ENCODE measurements at regions of chr2 and their contacts with region 1.

Region 1: GRCh38 chr2:15939854-15940660 is at the start of gene MYCN:
- DNase-seq: peak in 6 of 14 experiments; percentile 7 to 66 (median 18)
- ATAC-seq: peak; percentile 45
- H3K4me3 ChIP-seq: peak within 1 kb of the TSS; percentile 43
- H3K4me3 Mint-ChIP-seq: peak within 1 kb of the TSS; percentile 87
- H3K27ac ChIP-seq: no peak within 1 kb of the TSS
- H3K27ac Mint-ChIP-seq: no peak within 1 kb of the TSS
- H3K4me1 ChIP-seq: peaks cover 41% of the 10 kb centered on the region
- H3K4me1 Mint-ChIP-seq: peaks cover 36% of the 10 kb centered on the region
- H3K27me3 ChIP-seq: peaks cover 39 to 52% of the 10 kb centered on the region in 2 experiments
- H3K27me3 Mint-ChIP-seq: peaks cover 62% of the 10 kb centered on the region
- CTCF ChIP-seq: peak; percentile 69
- total RNA-seq, gene MYCN: 0.19 TPM in 1 of 2 experiments, not detected in the other

Region 2: DNA sequence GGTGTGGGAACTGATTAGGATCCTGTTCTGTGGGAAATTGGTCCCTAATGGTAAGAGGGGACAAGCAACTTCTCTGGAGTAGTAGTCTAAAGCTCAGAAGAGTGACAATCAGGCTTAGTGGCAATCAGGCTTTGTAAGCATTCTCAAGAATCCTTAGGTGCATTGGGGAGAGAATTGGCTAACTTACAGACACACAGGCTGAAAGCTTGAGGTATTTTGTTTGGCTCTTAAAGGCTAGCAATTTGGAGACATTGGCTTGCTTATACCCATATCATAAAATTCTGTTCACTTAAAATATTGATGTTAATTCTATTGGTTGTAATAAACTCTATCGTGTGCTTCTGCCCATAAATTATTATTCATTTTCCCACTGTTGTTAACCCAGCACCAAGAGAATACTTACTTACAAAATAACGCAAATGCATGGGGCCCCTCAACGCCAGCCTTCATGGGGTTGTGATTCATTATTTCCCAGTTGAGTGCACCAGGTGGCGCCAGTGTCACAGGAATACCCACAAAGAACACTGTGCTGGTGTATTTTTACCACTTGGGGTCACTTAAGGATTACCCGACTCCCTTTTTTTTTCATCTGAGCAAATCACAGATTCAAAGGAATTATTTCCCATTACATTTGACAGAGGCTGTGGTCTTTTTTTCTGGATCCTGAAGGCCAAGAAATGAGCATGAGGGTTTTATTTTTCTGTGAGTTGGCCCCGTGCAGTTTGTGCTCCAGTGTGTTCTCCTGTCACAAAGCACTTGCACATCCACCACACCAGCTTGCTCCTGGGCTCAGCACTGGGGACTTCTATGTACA is 302.9 kb before region 1 on chr2:
- CTCF ChIA-PET with region 1: no interaction called
- POLR2A ChIA-PET with region 1: no interaction called
- intact Hi-C with region 1: loop called in 1 of 2 experiments (anchors 10 kb)
- DNase-seq: peak; percentile 27 to 74 (median 47)
- ATAC-seq: peak; percentile 80
- H3K4me3 ChIP-seq: no peak overlapping the region
- H3K4me3 Mint-ChIP-seq: no peak overlapping the region
- H3K27ac ChIP-seq: no peak overlapping the region
- H3K27ac Mint-ChIP-seq: peak overlapping the region; percentile 49
- H3K4me1 ChIP-seq: no peaks in the 10 kb centered on the region
- H3K4me1 Mint-ChIP-seq: peaks cover 7% of the 10 kb centered on the region
- H3K27me3 ChIP-seq: no peaks in the 10 kb centered on the region
- H3K27me3 Mint-ChIP-seq: no peaks in the 10 kb centered on the region
- CTCF ChIP-seq: peak; percentile 94

Region 3: DNA sequence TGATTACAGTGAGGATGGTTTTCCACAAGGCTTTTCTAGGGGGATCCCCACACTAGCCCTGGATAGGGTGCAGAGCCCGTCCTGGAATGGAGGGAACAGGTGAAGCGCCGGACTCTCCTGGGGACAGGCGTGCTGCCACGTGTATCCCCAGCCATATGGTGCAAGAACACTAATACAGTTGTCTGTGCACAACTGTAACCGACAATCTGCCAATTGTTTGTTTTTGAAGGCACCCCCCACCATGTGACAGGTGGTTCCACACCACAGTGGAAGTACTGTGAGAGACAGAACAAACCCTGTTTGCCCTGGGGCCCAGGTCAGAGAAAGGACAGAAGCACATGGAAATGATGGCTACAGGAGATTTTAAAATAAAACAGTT is 53.2 kb after region 1 on chr2:
- CTCF ChIA-PET with region 1: no interaction called
- POLR2A ChIA-PET with region 1: no interaction called
- intact Hi-C with region 1: no loop called
- DNase-seq: no peak
- ATAC-seq: no peak
- H3K4me3 ChIP-seq: no peak overlapping the region
- H3K4me3 Mint-ChIP-seq: no peak overlapping the region
- H3K27ac ChIP-seq: no peak overlapping the region
- H3K27ac Mint-ChIP-seq: no peak overlapping the region
- H3K4me1 ChIP-seq: no peaks in the 10 kb centered on the region
- H3K4me1 Mint-ChIP-seq: no peaks in the 10 kb centered on the region
- H3K27me3 ChIP-seq: no peaks in the 10 kb centered on the region
- H3K27me3 Mint-ChIP-seq: no peaks in the 10 kb centered on the region
- CTCF ChIP-seq: no peak

Region 4: DNA sequence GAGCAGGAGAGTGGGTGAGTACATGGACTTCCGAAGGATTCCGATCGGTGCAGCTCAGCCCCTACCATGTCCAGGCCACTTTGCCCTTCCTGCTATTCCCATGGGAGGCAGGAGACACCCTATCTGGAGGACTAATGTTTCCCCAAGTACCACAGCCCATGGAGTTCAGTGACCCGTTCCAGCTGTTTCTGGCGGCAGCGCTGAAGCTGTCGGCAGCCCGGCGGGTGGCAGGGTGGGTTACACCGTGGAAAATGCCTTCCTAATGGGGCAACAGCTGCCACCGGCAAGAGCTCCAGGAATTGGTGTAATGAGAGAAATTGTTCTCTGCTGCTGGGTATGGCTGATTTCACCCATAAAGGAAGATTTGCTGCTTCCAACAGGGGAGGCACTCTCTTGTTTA is 98.6 kb after region 1 on chr2:
- CTCF ChIA-PET with region 1: no interaction called
- POLR2A ChIA-PET with region 1: no interaction called
- intact Hi-C with region 1: no loop called
- DNase-seq: no peak
- ATAC-seq: no peak
- H3K4me3 ChIP-seq: no peak overlapping the region
- H3K4me3 Mint-ChIP-seq: no peak overlapping the region
- H3K27ac ChIP-seq: no peak overlapping the region
- H3K27ac Mint-ChIP-seq: no peak overlapping the region
- H3K4me1 ChIP-seq: no peaks in the 10 kb centered on the region
- H3K4me1 Mint-ChIP-seq: no peaks in the 10 kb centered on the region
- H3K27me3 ChIP-seq: no peaks in the 10 kb centered on the region
- H3K27me3 Mint-ChIP-seq: peaks cover 12% of the 10 kb centered on the region
- CTCF ChIP-seq: no peak

Region 5: DNA sequence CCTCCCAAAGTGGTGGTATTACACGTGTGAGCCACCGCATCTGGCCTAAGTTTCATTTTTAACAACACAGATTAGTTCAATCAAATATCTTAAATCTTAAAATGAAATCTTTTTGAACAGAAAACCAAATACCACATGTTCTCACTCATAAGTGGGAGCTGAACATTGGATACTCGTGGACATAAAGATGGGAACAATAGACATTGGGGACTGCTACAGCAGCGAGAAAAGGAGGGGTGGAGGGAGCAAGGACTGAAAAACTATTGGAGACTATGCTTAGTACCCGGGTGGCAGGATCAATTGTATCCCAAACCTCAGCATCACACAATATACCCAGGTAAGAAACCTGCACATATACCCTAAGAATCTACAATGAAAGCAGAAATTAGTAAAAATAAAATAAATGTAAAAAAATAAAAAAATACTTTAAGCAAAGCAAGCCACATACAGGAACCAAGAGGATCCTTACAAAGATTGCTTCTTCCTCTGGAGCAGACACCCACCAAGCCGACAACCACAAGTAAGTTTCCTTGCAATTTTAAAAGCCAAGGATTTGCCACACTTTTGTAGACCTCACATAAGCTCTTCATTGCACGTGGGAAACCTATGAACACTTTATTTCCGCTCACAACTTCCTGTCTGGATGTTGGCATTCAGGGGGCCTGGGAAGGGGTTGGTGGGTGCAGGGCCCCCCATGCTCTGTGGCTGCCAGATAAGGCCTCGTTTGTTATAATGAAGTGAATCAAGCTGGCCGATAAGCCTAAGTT is 148.2 kb after region 1 on chr2:
- CTCF ChIA-PET with region 1: no interaction called
- POLR2A ChIA-PET with region 1: no interaction called
- intact Hi-C with region 1: loop called in 1 of 2 experiments (anchors 5 kb)
- DNase-seq: no peak
- ATAC-seq: no peak
- H3K4me3 ChIP-seq: no peak overlapping the region
- H3K4me3 Mint-ChIP-seq: no peak overlapping the region
- H3K27ac ChIP-seq: no peak overlapping the region
- H3K27ac Mint-ChIP-seq: no peak overlapping the region
- H3K4me1 ChIP-seq: no peaks in the 10 kb centered on the region
- H3K4me1 Mint-ChIP-seq: no peaks in the 10 kb centered on the region
- H3K27me3 ChIP-seq: no peaks in the 10 kb centered on the region
- H3K27me3 Mint-ChIP-seq: no peaks in the 10 kb centered on the region
- CTCF ChIP-seq: no peak

Region 6: GRCh38 chr2:16281451-16282336 is 341.6 kb after region 1 on chr2:
- CTCF ChIA-PET with region 1: no interaction called
- POLR2A ChIA-PET with region 1: no interaction called
- intact Hi-C with region 1: loop called in 1 of 2 experiments (anchors 2 kb)
- DNase-seq: peak in 2 of 14 experiments; percentile 12 to 26
- ATAC-seq: no peak
- H3K4me3 ChIP-seq: no peak overlapping the region
- H3K4me3 Mint-ChIP-seq: no peak overlapping the region
- H3K27ac ChIP-seq: no peak overlapping the region
- H3K27ac Mint-ChIP-seq: no peak overlapping the region
- H3K4me1 ChIP-seq: no peaks in the 10 kb centered on the region
- H3K4me1 Mint-ChIP-seq: no peaks in the 10 kb centered on the region
- H3K27me3 ChIP-seq: peaks cover 0 to 2% of the 10 kb centered on the region in 2 experiments
- H3K27me3 Mint-ChIP-seq: no peaks in the 10 kb centered on the region
- CTCF ChIP-seq: no peak

Region 7: GRCh38 chr2:16756831-16757644 is 817.0 kb after region 1 on chr2:
- CTCF ChIA-PET with region 1: no interaction called
- POLR2A ChIA-PET with region 1: no interaction called
- intact Hi-C with region 1: loop called (anchors 5 kb)
- DNase-seq: peak; percentile 18 to 76 (median 44)
- ATAC-seq: peak; percentile 67
- H3K4me3 ChIP-seq: no peak overlapping the region
- H3K4me3 Mint-ChIP-seq: no peak overlapping the region
- H3K27ac ChIP-seq: no peak overlapping the region
- H3K27ac Mint-ChIP-seq: no peak overlapping the region
- H3K4me1 ChIP-seq: no peaks in the 10 kb centered on the region
- H3K4me1 Mint-ChIP-seq: no peaks in the 10 kb centered on the region
- H3K27me3 ChIP-seq: no peaks in the 10 kb centered on the region
- H3K27me3 Mint-ChIP-seq: peaks cover 5% of the 10 kb centered on the region
- CTCF ChIP-seq: peak; percentile 75

Measured in CD4-positive, alpha-beta T cell (primary cell).